HepG2 (cell line): ENCODE measurements at regions of chr6 and their contacts with region 1.

Region 1: GRCh38 chr6:835476-836160 is 142.7 kb upstream of the EXOC2 start:
- DNase-seq: no peak
- ATAC-seq: peak; percentile 48; the same call in 1 of the 3 replicates
- H3K4me3 ChIP-seq: no peak overlapping the region
- H3K27ac ChIP-seq: no peak overlapping the region
- H3K4me1 ChIP-seq: peaks cover 33% of the 10 kb centered on the region
- H3K27me3 ChIP-seq: peaks cover 1 to 4% of the 10 kb centered on the region in 2 experiments; a peak in 1 of 5 replicates
- CTCF ChIP-seq: no peak
- EP300 ChIP-seq: no peak
- POLR2A ChIP-seq: no peak
- RAD21 ChIP-seq: no peak

Region 2: GRCh38 chr6:1325461-1326309 is 490.1 kb after region 1 on chr6:
- CTCF ChIA-PET with region 1: no interaction called
- POLR2A ChIA-PET with region 1: interaction called, 13 read pairs
- in situ Hi-C with region 1: no loop called
- intact Hi-C with region 1: no loop called
- DNase-seq: peak; percentile 99
- ATAC-seq: peak; percentile 85
- H3K4me3 ChIP-seq: peak overlapping the region; percentile 6 to 34 (median 14); a peak in 2 of 6 replicates
- H3K27ac ChIP-seq: peak overlapping the region; percentile 70
- H3K4me1 ChIP-seq: peaks cover 77% of the 10 kb centered on the region
- H3K27me3 ChIP-seq: no peaks in the 10 kb centered on the region
- CTCF ChIP-seq: no peak
- EP300 ChIP-seq: peak; percentile 81 to 94; a peak in 3 of 4 replicates
- POLR2A ChIP-seq: peak in 1 of 2 experiments; percentile 51; a peak in 1 of 4 replicates
- RAD21 ChIP-seq: no peak

Region 3: DNA sequence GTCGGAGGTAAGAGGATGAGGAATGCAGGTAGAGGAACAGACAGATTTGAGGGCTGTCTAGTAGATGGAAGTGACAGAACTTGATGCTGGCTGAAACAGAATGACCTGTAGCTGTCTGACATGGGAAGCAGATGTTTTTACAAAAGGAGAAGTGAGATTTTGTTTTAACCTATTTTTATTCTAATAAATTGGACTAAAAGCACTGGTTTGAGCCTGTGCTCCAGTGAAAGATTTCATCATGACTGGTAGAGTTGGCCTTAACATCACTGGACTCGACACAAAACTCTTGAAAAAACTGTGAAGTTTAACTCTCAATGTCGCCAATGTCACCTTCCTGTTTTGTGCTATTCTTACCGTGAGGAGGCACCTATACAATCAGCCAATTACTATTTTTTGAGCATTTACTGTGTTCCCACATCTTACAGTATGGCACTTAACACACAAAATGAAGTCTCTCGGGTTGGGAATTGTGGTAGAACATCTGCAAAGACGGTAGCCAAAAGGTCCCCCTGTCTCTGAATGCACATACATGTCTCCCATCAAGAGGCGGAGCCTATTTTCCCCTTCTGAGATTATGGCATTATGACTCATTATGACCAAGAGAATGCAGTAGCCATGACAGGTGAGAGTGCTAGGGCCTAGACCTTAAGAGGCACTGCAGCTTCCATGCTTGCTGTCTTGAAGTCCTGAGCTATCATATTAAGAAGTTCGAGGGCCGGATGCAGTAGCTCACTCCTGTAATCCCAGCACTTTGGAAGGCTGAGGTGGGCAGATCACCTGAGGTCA is 647.0 kb after region 1 on chr6:
- CTCF ChIA-PET with region 1: no interaction called
- POLR2A ChIA-PET with region 1: no interaction called
- in situ Hi-C with region 1: no loop called
- intact Hi-C with region 1: no loop called
- DNase-seq: no peak
- ATAC-seq: no peak
- H3K4me3 ChIP-seq: no peak overlapping the region
- H3K27ac ChIP-seq: no peak overlapping the region
- H3K4me1 ChIP-seq: no peaks in the 10 kb centered on the region
- H3K27me3 ChIP-seq: peaks cover 0 to 17% of the 10 kb centered on the region in 2 experiments; a peak in 4 of 5 replicates
- CTCF ChIP-seq: no peak
- EP300 ChIP-seq: no peak
- POLR2A ChIP-seq: no peak
- RAD21 ChIP-seq: no peak